ENCODE measurements at regions of chr1 and their contacts with region 1.

Region 1: DNA sequence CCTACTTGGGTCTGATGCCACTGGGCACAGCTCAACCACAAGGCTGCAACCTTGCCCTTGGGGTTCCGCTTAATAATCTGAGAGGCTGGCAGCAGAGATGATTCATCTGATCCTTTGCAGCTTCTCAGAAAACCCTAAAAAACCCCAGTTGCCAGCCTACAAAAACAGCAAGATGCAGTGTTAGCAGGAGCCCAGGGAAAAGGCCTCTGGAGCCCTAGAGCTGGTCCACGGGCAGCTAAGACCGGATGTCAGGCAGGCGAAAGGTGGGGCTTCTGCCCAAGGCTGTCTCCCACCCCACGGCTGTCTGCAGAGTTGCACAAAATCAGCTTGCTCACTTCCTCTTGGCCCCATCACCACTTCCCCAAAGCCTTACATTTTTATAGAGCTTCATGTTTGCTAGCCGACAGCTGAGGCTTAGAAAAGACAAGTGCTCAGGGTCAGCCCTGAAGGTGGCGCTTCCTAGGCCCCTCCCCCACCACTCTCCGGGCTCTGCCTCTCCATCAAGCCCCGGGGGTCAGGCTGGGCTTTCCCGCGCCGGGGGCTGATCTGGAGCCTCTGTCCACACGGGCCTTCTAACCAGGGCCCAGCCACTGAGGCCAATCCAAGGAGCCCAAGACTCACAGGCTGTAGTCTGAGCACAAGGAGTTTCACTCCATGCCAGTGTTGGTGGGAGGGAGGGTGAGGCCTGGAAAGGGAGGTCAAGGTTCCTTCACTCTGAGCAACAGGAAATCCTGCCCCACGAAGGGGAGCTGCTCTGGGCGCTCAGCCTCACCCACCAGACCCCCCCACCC is 4.2 kb upstream of the ADORA3 start:
- DNase-seq: peak; percentile 19 to 79 (median 64)
- ATAC-seq: peak; percentile 62
- H3K4me3 ChIP-seq: peak overlapping the region; percentile 38 to 58
- H3K4me3 Mint-ChIP-seq: peak overlapping the region; percentile 78
- H3K27ac ChIP-seq: peak overlapping the region; percentile 55 to 90
- H3K27ac Mint-ChIP-seq: peak overlapping the region; percentile 95
- H3K4me1 ChIP-seq: peaks cover 88% of the 10 kb centered on the region
- H3K4me1 Mint-ChIP-seq: peaks cover 52% of the 10 kb centered on the region
- H3K27me3 ChIP-seq: no peaks in the 10 kb centered on the region
- H3K27me3 Mint-ChIP-seq: no peaks in the 10 kb centered on the region
- CTCF ChIP-seq: no peak

Region 2: DNA sequence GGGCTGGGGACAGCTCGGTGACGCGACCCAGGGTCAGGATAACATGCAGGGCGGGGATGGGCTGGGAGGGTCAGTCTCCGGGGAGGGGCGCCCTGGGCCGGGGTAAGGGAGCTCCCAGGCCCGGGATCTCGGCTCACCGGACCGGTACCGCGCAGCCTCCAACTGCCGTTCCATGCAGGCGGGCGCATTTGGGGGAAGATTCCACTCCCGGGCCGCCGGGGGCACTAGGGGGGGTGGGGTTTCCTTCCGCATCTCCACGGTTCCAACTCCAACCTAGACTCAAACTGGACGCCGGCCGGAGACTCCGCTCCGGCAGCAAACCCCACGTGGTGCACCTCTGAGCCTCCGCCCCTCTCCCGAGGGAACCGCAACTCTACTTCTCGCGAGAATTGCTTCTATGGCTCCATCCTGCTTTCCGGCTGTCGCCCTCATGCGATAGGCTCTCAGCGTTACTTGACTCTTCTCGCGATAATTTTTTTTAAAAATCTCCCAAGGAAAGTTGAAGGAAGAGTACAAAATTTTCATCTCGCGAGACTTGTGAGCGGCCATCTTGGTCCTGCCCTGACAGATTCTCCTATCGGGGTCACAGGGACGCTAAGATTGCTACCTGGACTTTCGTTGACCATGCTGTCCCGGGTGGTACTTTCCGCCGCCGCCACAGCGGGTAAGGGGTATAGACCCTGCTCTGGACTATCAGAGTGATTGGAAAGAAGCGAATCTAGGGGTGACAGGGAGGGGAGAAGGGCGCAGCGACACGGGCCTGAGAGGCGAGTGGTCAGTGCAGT is 58.5 kb before region 1 on chr1 and contains the starts of genes ATP5PB and WDR77:
- CTCF ChIA-PET with region 1: interaction called, 18 read pairs
- POLR2A ChIA-PET with region 1: interaction called, 5 read pairs
- intact Hi-C with region 1: loop called in 1 of 2 experiments (anchors 5 kb)
- DNase-seq: peak; percentile 75 to 98 (median 89)
- ATAC-seq: peak; percentile 94
- H3K4me3 ChIP-seq: peak within 1 kb of the TSS; percentile 77 to 86
- H3K4me3 Mint-ChIP-seq: peak within 1 kb of the TSS; percentile 99
- H3K27ac ChIP-seq: peak within 1 kb of the TSS; percentile 75 to 83
- H3K27ac Mint-ChIP-seq: peak within 1 kb of the TSS; percentile 98
- H3K4me1 ChIP-seq: peaks cover 58% of the 10 kb centered on the region
- H3K4me1 Mint-ChIP-seq: peaks cover 84% of the 10 kb centered on the region
- H3K27me3 ChIP-seq: no peaks in the 10 kb centered on the region
- H3K27me3 Mint-ChIP-seq: no peaks in the 10 kb centered on the region
- CTCF ChIP-seq: no peak
- total RNA-seq, gene ATP5PB: 59.9 to 64.6 TPM
- total RNA-seq, gene WDR77: 9.5 to 11.4 TPM

Region 3: DNA sequence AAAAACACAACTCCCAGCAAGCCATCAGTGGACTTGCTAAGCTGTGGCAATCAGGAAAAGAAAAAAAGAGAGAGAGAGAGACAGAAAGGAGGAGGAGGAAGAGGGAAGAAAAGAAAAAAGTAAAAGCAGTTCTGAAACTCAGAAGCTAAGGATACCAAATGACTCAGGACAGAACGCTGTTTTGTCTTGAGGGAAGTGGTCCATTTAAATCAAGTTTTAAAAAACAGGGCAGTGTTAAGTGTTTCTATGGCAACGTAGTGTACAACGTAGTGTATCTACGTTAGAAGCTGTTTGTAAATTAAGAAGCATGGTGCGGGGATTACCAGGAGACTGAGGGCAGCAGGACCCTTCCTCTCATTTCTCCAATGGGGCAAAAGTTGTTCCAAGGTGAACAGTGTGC is 10.0 kb before region 1 on chr1:
- CTCF ChIA-PET with region 1: interaction called, 48 read pairs
- POLR2A ChIA-PET with region 1: interaction called, 13 read pairs
- intact Hi-C with region 1: no loop called
- DNase-seq: no peak
- ATAC-seq: no peak
- H3K4me3 ChIP-seq: no peak overlapping the region
- H3K4me3 Mint-ChIP-seq: no peak overlapping the region
- H3K27ac ChIP-seq: no peak overlapping the region
- H3K27ac Mint-ChIP-seq: no peak overlapping the region
- H3K4me1 ChIP-seq: no peaks in the 10 kb centered on the region
- H3K4me1 Mint-ChIP-seq: peaks cover 5% of the 10 kb centered on the region
- H3K27me3 ChIP-seq: no peaks in the 10 kb centered on the region
- H3K27me3 Mint-ChIP-seq: no peaks in the 10 kb centered on the region
- CTCF ChIP-seq: no peak

Region 4: DNA sequence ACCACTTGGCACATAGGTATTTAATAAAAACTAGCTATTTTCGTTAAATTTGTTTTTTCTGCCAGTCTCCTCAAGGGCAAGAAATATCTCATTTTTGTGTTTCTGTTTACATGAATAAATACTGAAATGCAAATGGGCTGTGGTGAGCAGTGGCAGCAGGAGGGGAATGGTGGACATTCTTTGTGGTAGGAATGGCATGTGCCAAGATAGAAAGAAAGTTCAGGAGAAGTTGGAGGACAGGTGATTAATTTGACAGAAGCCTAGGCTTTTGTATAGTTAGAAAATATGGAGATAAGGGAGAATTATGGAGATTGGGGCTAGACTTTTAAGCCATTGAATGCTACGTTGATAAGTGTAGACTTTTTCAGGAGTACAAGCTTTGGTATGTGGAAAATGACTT is 120.5 kb after region 1 on chr1:
- CTCF ChIA-PET with region 1: interaction called, 34 read pairs
- POLR2A ChIA-PET with region 1: interaction called, 9 read pairs
- intact Hi-C with region 1: no loop called
- DNase-seq: no peak
- ATAC-seq: no peak
- H3K4me3 ChIP-seq: no peak overlapping the region
- H3K4me3 Mint-ChIP-seq: peak overlapping the region; percentile 49
- H3K27ac ChIP-seq: peak overlapping the region in 1 of 2 experiments; percentile 51
- H3K27ac Mint-ChIP-seq: peak overlapping the region; percentile 78
- H3K4me1 ChIP-seq: peaks cover 88% of the 10 kb centered on the region
- H3K4me1 Mint-ChIP-seq: peaks cover 88% of the 10 kb centered on the region
- H3K27me3 ChIP-seq: no peaks in the 10 kb centered on the region
- H3K27me3 Mint-ChIP-seq: no peaks in the 10 kb centered on the region
- CTCF ChIP-seq: no peak

Region 5: GRCh38 chr1:111679541-111679940 is 171.9 kb after region 1 on chr1:
- CTCF ChIA-PET with region 1: interaction called, 15 read pairs
- POLR2A ChIA-PET with region 1: no interaction called
- intact Hi-C with region 1: no loop called
- DNase-seq: no peak
- ATAC-seq: no peak
- H3K4me3 ChIP-seq: no peak overlapping the region
- H3K4me3 Mint-ChIP-seq: no peak overlapping the region
- H3K27ac ChIP-seq: no peak overlapping the region
- H3K27ac Mint-ChIP-seq: peak overlapping the region; percentile 66
- H3K4me1 ChIP-seq: peaks cover 3% of the 10 kb centered on the region
- H3K4me1 Mint-ChIP-seq: peaks cover 39% of the 10 kb centered on the region
- H3K27me3 ChIP-seq: no peaks in the 10 kb centered on the region
- H3K27me3 Mint-ChIP-seq: no peaks in the 10 kb centered on the region
- CTCF ChIP-seq: no peak

Region 6: GRCh38 chr1:111707906-111708305 is 200.3 kb after region 1 on chr1:
- CTCF ChIA-PET with region 1: interaction called, 80 read pairs
- POLR2A ChIA-PET with region 1: no interaction called
- intact Hi-C with region 1: no loop called
- DNase-seq: no peak
- ATAC-seq: no peak
- H3K4me3 ChIP-seq: no peak overlapping the region
- H3K4me3 Mint-ChIP-seq: no peak overlapping the region
- H3K27ac ChIP-seq: no peak overlapping the region
- H3K27ac Mint-ChIP-seq: no peak overlapping the region
- H3K4me1 ChIP-seq: no peaks in the 10 kb centered on the region
- H3K4me1 Mint-ChIP-seq: peaks cover 4% of the 10 kb centered on the region
- H3K27me3 ChIP-seq: no peaks in the 10 kb centered on the region
- H3K27me3 Mint-ChIP-seq: no peaks in the 10 kb centered on the region
- CTCF ChIP-seq: no peak

Region 7: DNA sequence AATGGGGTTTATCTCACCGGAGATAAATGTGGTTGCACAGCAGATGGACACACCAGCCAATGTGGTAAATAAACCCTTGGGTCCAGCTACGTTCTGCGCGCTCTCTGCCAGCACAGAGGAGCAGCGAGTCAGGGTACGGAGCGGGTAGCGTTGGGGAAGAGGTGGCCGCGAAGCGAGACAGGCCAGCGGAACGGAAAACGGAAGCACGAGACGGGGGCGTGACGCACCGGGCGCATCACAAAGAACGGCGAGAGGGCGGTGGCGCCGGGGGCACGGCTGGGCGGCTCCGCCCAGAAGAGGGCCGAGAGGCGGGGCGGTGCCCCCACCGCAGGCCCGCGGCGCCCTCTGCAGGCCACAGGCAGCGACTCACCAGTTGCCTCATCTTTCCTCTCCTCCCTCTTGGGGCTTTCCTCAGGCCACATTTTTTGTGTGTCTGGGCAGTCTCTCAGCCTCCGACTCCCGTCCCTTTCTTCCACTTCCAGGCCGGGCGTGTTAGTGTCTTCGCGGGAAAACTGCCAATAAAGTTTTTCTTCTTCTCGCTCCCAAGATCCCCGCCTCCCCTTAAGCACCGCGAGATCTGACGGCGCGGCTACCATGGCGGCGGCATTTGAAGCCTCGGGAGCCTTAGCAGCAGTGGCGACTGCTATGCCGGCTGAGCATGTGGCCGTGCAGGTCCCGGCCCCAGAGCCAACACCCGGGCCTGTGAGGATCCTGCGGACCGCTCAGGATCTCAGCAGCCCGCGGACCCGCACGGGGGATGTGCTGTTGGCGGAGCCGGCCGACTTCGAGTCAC is 247.9 kb after region 1 on chr1 and contains the start of gene DDX20:
- CTCF ChIA-PET with region 1: interaction called, 19 read pairs
- POLR2A ChIA-PET with region 1: interaction called, 13 read pairs
- intact Hi-C with region 1: loop called in 1 of 2 experiments (anchors 1 kb)
- DNase-seq: peak; percentile 86 to 97 (median 93)
- ATAC-seq: peak; percentile 89
- H3K4me3 ChIP-seq: peak within 1 kb of the TSS; percentile 75 to 89
- H3K4me3 Mint-ChIP-seq: peak within 1 kb of the TSS; percentile 90
- H3K27ac ChIP-seq: peak within 1 kb of the TSS; percentile 93 to 96
- H3K27ac Mint-ChIP-seq: peak within 1 kb of the TSS; percentile 98
- H3K4me1 ChIP-seq: peaks cover 19% of the 10 kb centered on the region
- H3K4me1 Mint-ChIP-seq: peaks cover 43% of the 10 kb centered on the region
- H3K27me3 ChIP-seq: no peaks in the 10 kb centered on the region
- H3K27me3 Mint-ChIP-seq: no peaks in the 10 kb centered on the region
- CTCF ChIP-seq: peak; percentile 83
- total RNA-seq, gene DDX20: 35.4 to 35.9 TPM